HepG2 (cell line): ENCODE measurements at regions of chr5 and their contacts with region 1.

Region 1: DNA sequence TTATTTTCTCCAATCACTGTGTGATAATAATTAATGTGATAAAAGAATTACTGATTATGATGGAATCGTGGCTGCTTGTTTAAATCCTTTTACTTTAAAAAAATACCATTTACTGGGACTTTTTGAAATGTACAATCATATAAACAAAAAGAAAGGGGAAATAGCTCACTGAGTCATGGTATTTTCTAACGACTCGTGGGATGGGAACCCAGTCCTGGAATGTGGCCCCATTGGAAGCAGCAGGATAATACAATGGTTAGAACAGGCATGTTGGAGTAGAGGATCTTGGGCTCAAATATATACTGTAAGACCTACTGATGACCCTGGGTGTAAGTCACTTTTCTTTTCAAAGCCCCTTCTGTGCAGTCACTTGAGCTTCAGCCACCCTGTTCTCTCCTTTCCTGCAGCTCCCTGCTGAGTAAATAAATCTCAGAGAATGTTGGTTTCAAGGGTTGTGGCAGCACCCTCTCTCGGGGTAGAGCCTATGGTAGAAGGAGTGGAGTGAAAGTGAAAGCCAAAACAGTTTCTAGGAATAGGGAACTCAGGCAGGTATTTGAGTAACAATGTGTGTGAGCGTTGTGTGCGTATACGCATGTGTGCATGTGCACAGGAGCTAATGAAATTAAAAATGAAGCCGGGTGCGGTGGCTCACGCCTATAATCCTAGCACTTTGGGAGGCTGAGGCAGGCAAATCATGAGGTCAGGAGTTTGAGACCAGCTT is 40.8 kb upstream of the LARP1 start:
- DNase-seq: peak; percentile 66
- ATAC-seq: peak; percentile 55
- H3K4me3 ChIP-seq: 0 out of 6 replicates have a peak overlapping the region, but pooled peaks of 1 of the 3 experiments have one; percentile 8
- H3K27ac ChIP-seq: peak overlapping the region; percentile 59
- H3K4me1 ChIP-seq: peaks cover 40% of the 10 kb centered on the region
- H3K27me3 ChIP-seq: no peaks in the 10 kb centered on the region
- CTCF ChIP-seq: no peak
- EP300 ChIP-seq: no peak
- POLR2A ChIP-seq: no peak
- RAD21 ChIP-seq: no peak

Region 2: DNA sequence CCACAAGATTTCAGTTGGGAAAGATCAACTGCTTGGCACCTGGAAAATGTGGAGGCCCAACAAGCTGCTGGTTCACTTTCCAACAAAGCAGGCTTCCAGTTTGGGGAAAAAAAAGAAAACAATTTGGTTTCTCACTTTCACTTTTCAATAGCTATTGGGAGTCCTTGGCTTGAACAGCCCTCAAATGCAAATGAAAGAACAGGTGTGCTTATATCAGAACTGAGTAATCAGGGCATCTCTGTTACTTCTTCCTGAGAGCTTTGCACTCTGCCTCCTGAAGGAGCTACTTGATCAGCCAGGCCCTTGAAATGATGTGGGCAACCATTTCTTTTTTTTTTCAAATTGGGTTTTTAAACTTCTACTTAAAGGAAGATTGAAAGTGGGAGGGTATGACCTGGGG is 602.2 kb before region 1 on chr5:
- CTCF ChIA-PET with region 1: no interaction called
- POLR2A ChIA-PET with region 1: no interaction called
- in situ Hi-C with region 1: no loop called
- intact Hi-C with region 1: no loop called
- DNase-seq: no peak
- ATAC-seq: no peak
- H3K4me3 ChIP-seq: no peak overlapping the region
- H3K27ac ChIP-seq: no peak overlapping the region
- H3K4me1 ChIP-seq: no peaks in the 10 kb centered on the region
- H3K27me3 ChIP-seq: peaks cover 0 to 5% of the 10 kb centered on the region in 2 experiments; a peak in 1 of 5 replicates
- CTCF ChIP-seq: no peak
- EP300 ChIP-seq: no peak
- POLR2A ChIP-seq: no peak
- RAD21 ChIP-seq: no peak

Region 3: GRCh38 chr5:154493274-154493673 is 221.2 kb before region 1 on chr5:
- CTCF ChIA-PET with region 1: no interaction called
- POLR2A ChIA-PET with region 1: no interaction called
- in situ Hi-C with region 1: no loop called
- intact Hi-C with region 1: no loop called
- DNase-seq: no peak
- ATAC-seq: no peak
- H3K4me3 ChIP-seq: no peak overlapping the region
- H3K27ac ChIP-seq: no peak overlapping the region
- H3K4me1 ChIP-seq: no peaks in the 10 kb centered on the region
- H3K27me3 ChIP-seq: peaks cover 0 to 20% of the 10 kb centered on the region in 2 experiments; a peak in 3 of 5 replicates
- CTCF ChIP-seq: no peak
- EP300 ChIP-seq: no peak
- POLR2A ChIP-seq: no peak
- RAD21 ChIP-seq: no peak

Region 4: GRCh38 chr5:154593071-154593470 is 121.4 kb before region 1 on chr5:
- CTCF ChIA-PET with region 1: no interaction called
- POLR2A ChIA-PET with region 1: no interaction called
- in situ Hi-C with region 1: no loop called
- intact Hi-C with region 1: no loop called
- DNase-seq: no peak
- ATAC-seq: no peak
- H3K4me3 ChIP-seq: no peak overlapping the region
- H3K27ac ChIP-seq: no peak overlapping the region
- H3K4me1 ChIP-seq: peaks cover 3% of the 10 kb centered on the region; the same call in 1 of the 2 replicates
- H3K27me3 ChIP-seq: peaks cover 0 to 6% of the 10 kb centered on the region in 2 experiments; a peak in 1 of 5 replicates
- CTCF ChIP-seq: no peak
- EP300 ChIP-seq: no peak
- POLR2A ChIP-seq: no peak
- RAD21 ChIP-seq: no peak

Region 5: DNA sequence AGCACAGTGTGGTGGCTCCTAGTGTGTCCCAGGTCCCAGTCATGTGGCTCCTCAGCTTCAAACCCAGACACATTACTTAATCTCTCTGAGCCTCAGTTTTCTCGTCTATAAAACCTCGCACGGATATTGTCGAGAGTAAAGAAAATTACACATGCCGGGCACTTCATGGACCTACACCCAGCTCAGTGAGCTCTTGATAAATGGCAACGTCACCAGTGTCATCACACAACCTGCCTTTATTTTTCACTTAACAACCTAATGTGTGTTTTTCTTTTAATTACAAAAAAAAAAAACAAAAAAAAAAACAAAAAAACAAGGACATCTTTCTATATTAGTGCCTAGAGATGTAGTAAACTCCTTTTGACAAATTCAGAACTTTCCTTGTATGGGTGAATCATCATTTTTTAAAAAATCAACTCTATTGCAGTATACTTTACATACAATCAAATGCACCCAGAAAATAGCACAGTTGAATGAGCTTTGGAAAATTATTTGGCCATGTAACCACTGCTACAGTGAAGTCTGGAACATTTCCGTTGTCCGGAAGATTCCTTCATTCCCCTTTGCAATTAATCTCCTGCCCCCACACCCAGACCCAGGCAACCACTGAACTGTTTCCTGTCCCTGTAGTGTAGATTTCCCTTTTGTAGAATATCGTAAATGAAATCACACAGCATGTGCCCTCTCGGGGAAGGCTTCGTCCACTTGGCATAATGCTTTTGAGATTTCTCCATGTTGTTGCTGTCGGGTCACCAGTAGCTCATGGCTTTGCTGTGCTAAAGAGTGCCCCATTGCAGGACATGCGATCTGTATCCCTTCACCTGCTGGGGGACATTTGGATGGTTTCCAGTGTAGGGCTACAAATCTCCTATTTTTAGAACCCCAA is 59.7 kb before region 1 on chr5:
- CTCF ChIA-PET with region 1: no interaction called
- POLR2A ChIA-PET with region 1: no interaction called
- in situ Hi-C with region 1: no loop called
- intact Hi-C with region 1: loop called (anchors 10 kb)
- DNase-seq: no peak
- ATAC-seq: no peak
- H3K4me3 ChIP-seq: no peak overlapping the region
- H3K27ac ChIP-seq: peak overlapping the region; percentile 56
- H3K4me1 ChIP-seq: peaks cover 31% of the 10 kb centered on the region
- H3K27me3 ChIP-seq: no peaks in the 10 kb centered on the region
- CTCF ChIP-seq: no peak
- EP300 ChIP-seq: no peak
- POLR2A ChIP-seq: no peak
- RAD21 ChIP-seq: no peak

Region 6: DNA sequence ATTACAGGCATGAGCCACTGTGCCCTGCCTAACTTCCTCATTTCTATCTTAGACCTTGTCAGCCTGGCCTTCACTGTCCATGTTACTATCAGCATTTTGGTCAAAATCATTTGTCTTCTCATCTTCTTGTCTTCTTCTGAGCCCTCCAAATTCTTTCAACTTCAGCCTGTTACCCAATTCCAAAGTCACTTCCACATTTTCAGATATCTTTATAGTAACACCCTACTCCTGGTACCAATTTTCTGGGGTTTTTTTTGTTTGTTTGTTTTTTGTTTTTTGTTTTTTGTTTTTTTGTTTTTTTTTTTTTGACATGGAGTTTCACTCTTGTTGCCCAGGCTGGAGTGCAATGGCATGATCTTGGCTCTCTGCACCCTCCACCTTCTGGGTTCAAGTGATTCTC is 49.6 kb before region 1 on chr5:
- CTCF ChIA-PET with region 1: no interaction called
- POLR2A ChIA-PET with region 1: no interaction called
- in situ Hi-C with region 1: no loop called
- intact Hi-C with region 1: no loop called
- DNase-seq: no peak
- ATAC-seq: no peak
- H3K4me3 ChIP-seq: no peak overlapping the region
- H3K27ac ChIP-seq: no peak overlapping the region
- H3K4me1 ChIP-seq: peaks cover 9% of the 10 kb centered on the region
- H3K27me3 ChIP-seq: no peaks in the 10 kb centered on the region
- CTCF ChIP-seq: no peak
- EP300 ChIP-seq: no peak
- POLR2A ChIP-seq: no peak
- RAD21 ChIP-seq: no peak

Region 7: DNA sequence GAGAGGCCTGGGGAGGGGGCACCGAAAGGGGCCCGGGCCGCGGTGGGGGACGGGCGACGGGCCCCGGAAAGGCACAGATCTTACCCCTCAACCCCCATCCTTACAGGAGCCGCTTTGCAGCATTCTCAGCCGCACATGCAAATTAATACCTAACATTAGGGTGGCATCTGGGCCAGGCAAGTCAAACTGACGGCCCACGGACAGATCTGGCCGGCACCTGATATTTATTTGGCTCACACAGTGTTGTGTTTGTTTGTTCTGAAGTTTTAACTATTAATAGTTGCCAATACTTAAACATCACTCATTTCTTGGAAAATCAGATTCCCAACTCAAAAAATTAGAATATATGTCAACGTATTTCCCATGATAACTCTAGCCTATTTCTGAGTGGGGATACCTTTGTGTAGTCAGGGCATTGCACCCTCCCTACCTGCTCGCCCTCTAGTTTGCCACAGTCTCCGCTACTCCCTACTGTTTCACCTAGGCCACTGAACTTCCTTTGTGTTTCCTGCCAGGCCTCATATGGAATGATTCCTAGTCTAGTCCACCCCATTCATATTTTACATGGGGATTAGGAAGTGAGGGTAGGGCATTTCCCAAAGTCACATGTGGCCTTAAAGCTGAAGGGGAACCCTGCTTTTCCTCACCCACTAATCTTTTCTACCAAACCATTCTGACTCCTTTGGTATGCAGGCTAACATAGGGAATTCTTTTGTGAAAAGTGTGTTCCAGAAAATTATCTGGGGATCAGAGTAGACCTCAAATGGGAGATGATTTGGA is 31.1 kb before region 1 on chr5:
- CTCF ChIA-PET with region 1: no interaction called
- POLR2A ChIA-PET with region 1: interaction called, 18 read pairs
- in situ Hi-C with region 1: no loop called
- intact Hi-C with region 1: no loop called
- DNase-seq: no peak
- ATAC-seq: peak; percentile 34; the same call in 2 of the 3 replicates
- H3K4me3 ChIP-seq: peak overlapping the region; percentile 59 to 67 (median 66)
- H3K27ac ChIP-seq: peak overlapping the region; percentile 74
- H3K4me1 ChIP-seq: peaks cover 55% of the 10 kb centered on the region
- H3K27me3 ChIP-seq: no peaks in the 10 kb centered on the region
- CTCF ChIP-seq: no peak
- EP300 ChIP-seq: no peak
- POLR2A ChIP-seq: no peak
- RAD21 ChIP-seq: no peak

Region 8: GRCh38 chr5:154701110-154701572 is 13.3 kb before region 1 on chr5:
- CTCF ChIA-PET with region 1: no interaction called
- POLR2A ChIA-PET with region 1: interaction called, 12 read pairs
- in situ Hi-C with region 1: no loop called
- intact Hi-C with region 1: loop called (anchors 1 kb)
- DNase-seq: peak; percentile 83
- ATAC-seq: peak; percentile 66
- H3K4me3 ChIP-seq: peak overlapping the region in 1 of 3 experiments; percentile 51; a peak in 2 of 6 replicates
- H3K27ac ChIP-seq: peak overlapping the region; percentile 58
- H3K4me1 ChIP-seq: peaks cover 82% of the 10 kb centered on the region
- H3K27me3 ChIP-seq: no peaks in the 10 kb centered on the region
- CTCF ChIP-seq: no peak
- EP300 ChIP-seq: peak in 1 of 2 experiments; percentile 9; a peak in 1 of 4 replicates
- POLR2A ChIP-seq: no peak
- RAD21 ChIP-seq: no peak

Region 9: GRCh38 chr5:154729613-154730012 is 15.2 kb after region 1 on chr5:
- CTCF ChIA-PET with region 1: no interaction called
- POLR2A ChIA-PET with region 1: interaction called, 11 read pairs
- in situ Hi-C with region 1: no loop called
- intact Hi-C with region 1: no loop called
- DNase-seq: peak; percentile 82
- ATAC-seq: peak; percentile 72
- H3K4me3 ChIP-seq: no peak overlapping the region
- H3K27ac ChIP-seq: peak overlapping the region; percentile 14
- H3K4me1 ChIP-seq: peaks cover 56% of the 10 kb centered on the region
- H3K27me3 ChIP-seq: no peaks in the 10 kb centered on the region
- CTCF ChIP-seq: no peak
- EP300 ChIP-seq: peak in 1 of 2 experiments; percentile 59; a peak in 2 of 4 replicates
- POLR2A ChIP-seq: no peak
- RAD21 ChIP-seq: no peak